HepG2 (cell line): ENCODE measurements at regions of chr2 and their contacts with region 1.

Region 1: GRCh38 chr2:98771721-98772524 is 41.0 kb upstream of the MGAT4A start:
- DNase-seq: no peak
- ATAC-seq: no peak
- H3K4me3 ChIP-seq: no peak overlapping the region
- H3K27ac ChIP-seq: no peak overlapping the region
- H3K4me1 ChIP-seq: peaks cover 57% of the 10 kb centered on the region
- H3K27me3 ChIP-seq: no peaks in the 10 kb centered on the region
- CTCF ChIP-seq: no peak
- EP300 ChIP-seq: no peak
- POLR2A ChIP-seq: no peak
- RAD21 ChIP-seq: no peak

Region 2: GRCh38 chr2:98795891-98796676 is 24.2 kb after region 1 on chr2:
- CTCF ChIA-PET with region 1: no interaction called
- POLR2A ChIA-PET with region 1: interaction called, 15 read pairs
- in situ Hi-C with region 1: no loop called
- intact Hi-C with region 1: loop called (anchors 2 kb)
- DNase-seq: peak; percentile 100
- ATAC-seq: peak; percentile 89
- H3K4me3 ChIP-seq: peak overlapping the region; percentile 4 to 53 (median 28); a peak in 4 of 6 replicates
- H3K27ac ChIP-seq: peak overlapping the region; percentile 94
- H3K4me1 ChIP-seq: peaks cover 80% of the 10 kb centered on the region
- H3K27me3 ChIP-seq: no peaks in the 10 kb centered on the region
- CTCF ChIP-seq: peak; percentile 69
- EP300 ChIP-seq: peak; percentile 96 to 99
- POLR2A ChIP-seq: peak; percentile 72 to 79
- RAD21 ChIP-seq: peak; percentile 76

Region 3: GRCh38 chr2:98819231-98819766 is 47.4 kb after region 1 on chr2:
- CTCF ChIA-PET with region 1: no interaction called
- POLR2A ChIA-PET with region 1: no interaction called
- in situ Hi-C with region 1: loop called (anchors 5 kb)
- intact Hi-C with region 1: no loop called
- DNase-seq: no peak
- ATAC-seq: no peak
- H3K4me3 ChIP-seq: no peak overlapping the region
- H3K27ac ChIP-seq: no peak overlapping the region
- H3K4me1 ChIP-seq: peaks cover 12% of the 10 kb centered on the region
- H3K27me3 ChIP-seq: no peaks in the 10 kb centered on the region
- CTCF ChIP-seq: no peak
- EP300 ChIP-seq: no peak
- POLR2A ChIP-seq: no peak
- RAD21 ChIP-seq: no peak

Region 4: DNA sequence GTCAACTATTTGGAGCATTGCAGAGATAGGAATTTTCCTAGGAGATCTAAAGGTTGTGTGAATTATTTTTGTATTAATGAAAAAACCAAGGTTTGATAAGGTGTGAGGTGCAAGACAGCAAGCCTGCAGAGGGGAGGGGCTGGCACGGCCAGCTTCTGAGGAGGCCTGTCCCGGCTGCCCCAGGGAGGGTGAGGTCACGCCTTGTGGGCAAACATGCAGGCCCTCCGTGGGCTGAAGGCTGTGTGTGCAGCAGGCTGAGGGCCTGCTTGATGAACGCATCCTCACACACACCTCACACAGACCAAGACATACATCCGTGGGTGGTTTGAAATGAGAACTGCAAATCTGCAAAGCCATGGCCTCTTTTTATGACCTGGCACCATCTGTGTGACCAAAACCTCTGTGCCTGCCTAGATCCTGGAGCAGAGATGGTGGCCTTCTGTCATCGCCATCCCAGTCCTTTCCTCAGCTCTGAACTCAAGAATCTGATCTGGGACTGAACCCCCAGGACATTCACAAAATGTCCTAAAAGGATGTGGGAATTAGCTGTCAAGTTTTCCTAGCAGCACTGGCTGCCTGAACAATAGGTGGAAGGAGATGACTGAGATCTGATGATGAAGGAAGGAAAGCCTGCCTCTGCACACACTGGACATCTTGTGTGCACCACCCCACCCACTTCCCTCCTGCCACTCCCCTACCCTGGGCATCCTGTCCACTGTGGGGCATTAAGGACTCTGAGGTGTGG is 61.4 kb after region 1 on chr2:
- CTCF ChIA-PET with region 1: no interaction called
- POLR2A ChIA-PET with region 1: no interaction called
- in situ Hi-C with region 1: no loop called
- intact Hi-C with region 1: no loop called
- DNase-seq: no peak
- ATAC-seq: peak; percentile 41
- H3K4me3 ChIP-seq: no peak overlapping the region
- H3K27ac ChIP-seq: no peak overlapping the region
- H3K4me1 ChIP-seq: peaks cover 70% of the 10 kb centered on the region
- H3K27me3 ChIP-seq: no peaks in the 10 kb centered on the region
- CTCF ChIP-seq: no peak
- EP300 ChIP-seq: no peak
- POLR2A ChIP-seq: no peak
- RAD21 ChIP-seq: no peak